Mammary epithelial cell (primary cell): ENCODE measurements at regions of chr16 and their contacts with region 1.

Region 1: DNA sequence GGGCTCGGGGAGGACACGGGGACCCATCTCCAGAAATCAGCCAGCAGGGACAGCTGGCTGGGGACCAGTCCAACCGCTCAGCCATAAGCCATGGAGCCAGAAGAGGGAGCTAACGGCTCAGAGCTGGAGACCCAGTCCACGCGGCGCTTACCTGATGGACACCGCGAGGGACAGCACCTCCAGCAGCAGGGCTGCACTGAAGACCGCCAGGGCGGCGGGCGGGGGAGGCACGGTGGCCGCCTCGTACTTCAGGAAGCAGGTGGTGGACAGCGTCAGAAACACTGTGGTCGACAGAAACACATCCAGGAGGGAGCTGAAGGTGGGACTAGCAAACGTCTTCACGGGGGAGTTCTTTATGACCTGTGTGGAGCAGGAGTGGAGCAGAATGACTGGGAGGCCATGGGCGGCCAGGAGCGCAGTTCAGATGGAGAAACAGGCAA is 102.6 kb upstream of the CREBBP start:
- DNase-seq: peak; percentile 58
- H3K4me3 ChIP-seq: no peak overlapping the region
- H3K27ac ChIP-seq: no peak overlapping the region
- H3K4me1 ChIP-seq: peaks cover 7% of the 10 kb centered on the region
- H3K27me3 ChIP-seq: no peaks in the 10 kb centered on the region
- CTCF ChIP-seq: peak; percentile 73 to 93

Region 2: DNA sequence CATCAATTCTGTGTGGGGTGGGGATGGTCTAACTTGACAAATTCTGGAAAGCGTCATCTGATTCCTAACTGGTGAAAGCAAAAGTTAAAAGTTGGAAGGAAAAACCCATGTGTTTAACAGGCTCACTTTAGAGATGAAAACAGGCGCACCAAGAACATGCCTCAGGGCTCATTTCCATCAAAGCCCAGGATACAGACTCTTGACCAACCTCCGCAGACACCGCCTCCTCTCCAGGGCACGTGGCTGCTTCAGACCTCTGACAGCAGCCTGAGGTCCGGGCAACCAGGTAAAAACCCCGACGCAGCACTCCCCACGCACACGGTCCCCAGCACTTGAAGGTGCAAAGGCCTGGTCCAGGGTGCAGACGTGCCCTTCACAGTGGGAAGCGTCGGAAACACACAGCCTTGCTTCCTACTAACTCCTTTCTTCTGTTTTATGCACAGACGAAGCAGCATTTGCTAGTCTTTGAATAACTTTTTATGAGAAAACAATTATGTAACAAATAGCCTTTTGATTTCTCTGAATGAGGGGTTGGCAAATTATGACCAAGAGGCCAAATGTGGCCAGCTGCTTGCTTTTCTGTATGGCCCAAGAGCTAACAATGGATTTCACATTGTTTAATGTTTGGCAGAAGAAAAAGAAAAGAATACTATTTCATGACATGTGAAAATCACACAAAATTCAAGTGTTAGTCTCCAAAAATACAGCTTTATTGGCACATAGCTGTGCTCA is 221.6 kb before region 1 on chr16:
- CTCF ChIA-PET with region 1: no interaction called
- dilution Hi-C with region 1: no loop called
- in situ Hi-C with region 1: no loop called
- intact Hi-C with region 1: no loop called
- DNase-seq: no peak
- H3K4me3 ChIP-seq: no peak overlapping the region
- H3K27ac ChIP-seq: no peak overlapping the region
- H3K4me1 ChIP-seq: no peaks in the 10 kb centered on the region
- H3K27me3 ChIP-seq: no peaks in the 10 kb centered on the region
- CTCF ChIP-seq: no peak

Region 3: GRCh38 chr16:3961449-3961849 is 21.7 kb before region 1 on chr16:
- CTCF ChIA-PET with region 1: no interaction called
- dilution Hi-C with region 1: no loop called
- in situ Hi-C with region 1: no loop called
- intact Hi-C with region 1: no loop called
- DNase-seq: peak; percentile 58
- H3K4me3 ChIP-seq: no peak overlapping the region
- H3K27ac ChIP-seq: no peak overlapping the region
- H3K4me1 ChIP-seq: no peaks in the 10 kb centered on the region
- H3K27me3 ChIP-seq: peaks cover 7% of the 10 kb centered on the region
- CTCF ChIP-seq: no peak

Region 4: DNA sequence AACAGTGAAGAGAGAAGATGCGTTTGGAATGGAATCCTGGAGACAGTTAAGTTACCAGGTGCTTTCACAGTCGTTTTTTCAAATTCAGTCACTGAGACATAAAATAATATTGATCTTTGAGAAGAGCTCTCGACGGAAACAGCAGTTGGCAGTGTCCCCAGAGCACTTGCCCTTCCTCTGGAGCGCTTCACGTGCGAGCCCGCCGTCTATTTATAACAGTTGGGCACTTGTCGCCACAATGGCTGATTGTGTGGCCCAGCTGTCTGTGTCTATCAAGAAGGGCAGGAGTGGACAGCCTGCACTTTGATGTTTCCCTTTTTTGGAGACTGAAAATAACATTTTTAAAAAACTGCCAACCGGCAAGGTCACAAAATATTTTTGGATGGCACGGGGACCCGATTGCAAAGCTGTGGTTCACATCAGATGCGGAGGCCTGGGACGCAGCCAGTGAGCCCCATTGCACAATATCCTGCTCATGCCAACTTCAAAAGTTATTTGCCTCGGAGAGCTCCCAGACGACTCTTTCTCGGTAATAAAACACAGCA is 70.3 kb after region 1 on chr16:
- CTCF ChIA-PET with region 1: no interaction called
- dilution Hi-C with region 1: no loop called
- in situ Hi-C with region 1: no loop called
- intact Hi-C with region 1: loop called (anchors 5 kb)
- DNase-seq: peak; percentile 50
- H3K4me3 ChIP-seq: peak overlapping the region in 1 of 3 experiments; percentile 2
- H3K27ac ChIP-seq: peak overlapping the region; percentile 56
- H3K4me1 ChIP-seq: peaks cover 31% of the 10 kb centered on the region
- H3K27me3 ChIP-seq: no peaks in the 10 kb centered on the region
- CTCF ChIP-seq: no peak

Region 5: GRCh38 chr16:4183237-4184036 is 200.3 kb after region 1 on chr16:
- CTCF ChIA-PET with region 1: no interaction called
- dilution Hi-C with region 1: no loop called
- in situ Hi-C with region 1: no loop called
- intact Hi-C with region 1: loop called (anchors 5 kb)
- DNase-seq: peak; percentile 92
- H3K4me3 ChIP-seq: peak overlapping the region; percentile 72 to 78 (median 73)
- H3K27ac ChIP-seq: peak overlapping the region; percentile 84
- H3K4me1 ChIP-seq: peaks cover 13% of the 10 kb centered on the region
- H3K27me3 ChIP-seq: no peaks in the 10 kb centered on the region
- CTCF ChIP-seq: no peak

Region 6: GRCh38 chr16:4330277-4330874 is 347.3 kb after region 1 on chr16:
- CTCF ChIA-PET with region 1: no interaction called
- dilution Hi-C with region 1: no loop called
- in situ Hi-C with region 1: no loop called
- intact Hi-C with region 1: loop called (anchors 1 kb)
- DNase-seq: peak; percentile 32
- H3K4me3 ChIP-seq: no peak overlapping the region
- H3K27ac ChIP-seq: no peak overlapping the region
- H3K4me1 ChIP-seq: peaks cover 10% of the 10 kb centered on the region
- H3K27me3 ChIP-seq: no peaks in the 10 kb centered on the region
- CTCF ChIP-seq: peak; percentile 79 to 95

Region 7: DNA sequence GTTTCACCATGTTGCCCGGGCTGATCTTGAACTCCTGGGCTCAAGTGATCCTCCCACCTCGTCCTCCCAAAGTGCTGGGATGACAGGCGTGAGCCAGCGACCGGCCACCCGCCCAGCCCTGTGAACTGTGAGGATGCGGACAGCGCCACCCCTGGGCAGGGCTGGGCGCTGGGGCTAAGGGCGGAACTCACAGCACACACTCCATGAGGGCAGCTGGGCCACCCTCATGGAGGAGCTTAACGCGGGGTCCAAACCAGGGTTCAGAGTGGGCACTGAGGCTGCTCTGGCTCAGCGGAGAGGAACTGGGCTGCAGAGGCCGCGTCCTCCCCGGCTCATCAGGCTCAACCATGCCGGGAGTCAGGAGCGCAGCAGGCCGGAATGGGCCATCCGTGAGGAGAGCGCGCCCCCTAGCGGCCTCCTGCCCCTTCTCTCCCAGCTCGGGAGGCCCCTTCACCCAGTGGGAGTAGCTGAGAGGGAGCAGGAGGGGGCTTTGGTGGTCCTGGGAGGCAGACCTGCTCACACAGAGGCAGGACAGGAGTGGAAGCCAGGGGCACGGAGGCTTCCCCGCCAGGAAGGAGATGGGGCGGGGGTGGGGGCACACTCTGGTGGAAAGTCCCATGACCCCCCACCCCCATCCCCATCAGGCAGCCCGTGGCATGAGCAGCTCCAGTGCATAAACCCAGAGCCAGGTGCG is 419.5 kb after region 1 on chr16:
- CTCF ChIA-PET with region 1: no interaction called
- dilution Hi-C with region 1: no loop called
- in situ Hi-C with region 1: no loop called
- intact Hi-C with region 1: loop called (anchors 1 kb)
- DNase-seq: peak; percentile 53
- H3K4me3 ChIP-seq: peak overlapping the region in 1 of 3 experiments; percentile 22
- H3K27ac ChIP-seq: no peak overlapping the region
- H3K4me1 ChIP-seq: peaks cover 4% of the 10 kb centered on the region
- H3K27me3 ChIP-seq: no peaks in the 10 kb centered on the region
- CTCF ChIP-seq: peak; percentile 57 to 88